PC-9 (cell line): ENCODE measurements at regions of chr9 and their contacts with region 1.

Region 1: GRCh38 chr9:136118320-136119060 is at the start of gene TMEM250:
- DNase-seq: peak; percentile 84 to 98
- H3K4me3 ChIP-seq: peak within 1 kb of the TSS; percentile 93
- H3K27ac ChIP-seq: peak within 1 kb of the TSS; percentile 49
- H3K4me1 ChIP-seq: 0 out of 2 replicates have a peak, but pooled peaks cover 12% of the 10 kb centered on the region
- H3K27me3 ChIP-seq: no peaks in the 10 kb centered on the region
- CTCF ChIP-seq: no peak
- total RNA-seq, gene TMEM250: 73.8 and 75.3 TPM in 2 replicates

Region 2: GRCh38 chr9:135602789-135603481 is 515.6 kb before region 1 on chr9:
- CTCF ChIA-PET with region 1: no interaction called
- POLR2A ChIA-PET with region 1: no interaction called
- intact Hi-C with region 1: loop called (anchors 5 kb)
- DNase-seq: peak in 1 of 2 experiments; percentile 48
- H3K4me3 ChIP-seq: no peak overlapping the region
- H3K27ac ChIP-seq: no peak overlapping the region
- H3K4me1 ChIP-seq: no peaks in the 10 kb centered on the region
- H3K27me3 ChIP-seq: peaks cover 70% of the 10 kb centered on the region
- CTCF ChIP-seq: peak; percentile 90

Region 3: GRCh38 chr9:135613946-135614805 is 504.3 kb before region 1 on chr9:
- CTCF ChIA-PET with region 1: no interaction called
- POLR2A ChIA-PET with region 1: no interaction called
- intact Hi-C with region 1: no loop called
- DNase-seq: no peak
- H3K4me3 ChIP-seq: no peak overlapping the region
- H3K27ac ChIP-seq: no peak overlapping the region
- H3K4me1 ChIP-seq: no peaks in the 10 kb centered on the region
- H3K27me3 ChIP-seq: peaks cover 86% of the 10 kb centered on the region
- CTCF ChIP-seq: no peak

Region 4: DNA sequence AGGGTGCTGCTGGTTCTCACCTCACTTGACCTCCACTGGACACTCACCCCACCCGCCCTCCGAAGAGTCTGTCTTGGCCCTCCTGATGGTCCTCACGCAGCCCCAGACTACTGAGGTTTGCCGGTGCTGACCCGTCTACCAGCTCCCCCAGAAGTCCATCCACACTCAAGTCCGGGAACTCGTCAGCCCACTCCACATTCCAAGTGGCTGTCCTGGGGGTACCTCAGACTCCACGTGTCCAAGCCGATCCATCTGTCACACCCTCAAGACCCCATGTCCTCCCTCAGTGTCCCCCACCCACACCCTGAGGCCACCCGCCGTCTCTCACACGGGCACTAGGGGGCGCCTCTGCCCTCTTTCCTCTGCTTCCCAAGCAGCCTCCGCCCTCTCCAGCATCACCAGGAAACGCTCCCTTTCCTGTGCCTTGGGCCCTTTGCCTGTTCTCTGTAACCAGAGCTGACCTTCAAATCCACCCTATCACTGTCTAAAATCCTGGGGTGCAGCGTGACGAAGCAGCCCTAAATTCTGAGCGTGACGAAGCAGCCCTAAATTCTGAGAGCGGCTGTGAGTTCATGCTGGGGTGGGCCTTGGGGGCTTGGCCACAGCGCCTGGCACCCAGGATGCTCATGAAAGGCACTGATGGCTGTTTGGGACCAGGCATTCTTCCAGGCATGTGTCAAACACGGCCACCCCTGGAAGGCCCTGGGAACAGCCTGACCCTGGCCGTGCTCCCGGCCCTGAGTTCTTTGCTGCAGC is 320.8 kb before region 1 on chr9:
- CTCF ChIA-PET with region 1: no interaction called
- POLR2A ChIA-PET with region 1: no interaction called
- intact Hi-C with region 1: loop called (anchors 5 kb)
- DNase-seq: peak in 1 of 2 experiments; percentile 33
- H3K4me3 ChIP-seq: no peak overlapping the region
- H3K27ac ChIP-seq: no peak overlapping the region
- H3K4me1 ChIP-seq: no peaks in the 10 kb centered on the region
- H3K27me3 ChIP-seq: no peaks in the 10 kb centered on the region
- CTCF ChIP-seq: peak; percentile 53

Region 5: GRCh38 chr9:135961277-135961705 is 157.2 kb before region 1 on chr9 and contains the start of gene UBAC1:
- CTCF ChIA-PET with region 1: no interaction called
- POLR2A ChIA-PET with region 1: no interaction called
- intact Hi-C with region 1: loop called (anchors 2 kb)
- DNase-seq: peak; percentile 64 to 87
- H3K4me3 ChIP-seq: peak within 1 kb of the TSS; percentile 47; the same call in 1 of the 2 replicates
- H3K27ac ChIP-seq: no peak within 1 kb of the TSS
- H3K4me1 ChIP-seq: no peaks in the 10 kb centered on the region
- H3K27me3 ChIP-seq: no peaks in the 10 kb centered on the region
- CTCF ChIP-seq: no peak
- total RNA-seq, gene UBAC1: 27.6 and 37.1 TPM in 2 replicates

Region 6: GRCh38 chr9:136051517-136052432 is 66.7 kb before region 1 on chr9:
- CTCF ChIA-PET with region 1: no interaction called
- POLR2A ChIA-PET with region 1: no interaction called
- intact Hi-C with region 1: loop called (anchors 5 kb)
- DNase-seq: peak; percentile 92 to 96
- H3K4me3 ChIP-seq: peak overlapping the region; percentile 74
- H3K27ac ChIP-seq: peak overlapping the region; percentile 65
- H3K4me1 ChIP-seq: peaks cover 33% of the 10 kb centered on the region
- H3K27me3 ChIP-seq: no peaks in the 10 kb centered on the region
- CTCF ChIP-seq: no peak

Region 7: DNA sequence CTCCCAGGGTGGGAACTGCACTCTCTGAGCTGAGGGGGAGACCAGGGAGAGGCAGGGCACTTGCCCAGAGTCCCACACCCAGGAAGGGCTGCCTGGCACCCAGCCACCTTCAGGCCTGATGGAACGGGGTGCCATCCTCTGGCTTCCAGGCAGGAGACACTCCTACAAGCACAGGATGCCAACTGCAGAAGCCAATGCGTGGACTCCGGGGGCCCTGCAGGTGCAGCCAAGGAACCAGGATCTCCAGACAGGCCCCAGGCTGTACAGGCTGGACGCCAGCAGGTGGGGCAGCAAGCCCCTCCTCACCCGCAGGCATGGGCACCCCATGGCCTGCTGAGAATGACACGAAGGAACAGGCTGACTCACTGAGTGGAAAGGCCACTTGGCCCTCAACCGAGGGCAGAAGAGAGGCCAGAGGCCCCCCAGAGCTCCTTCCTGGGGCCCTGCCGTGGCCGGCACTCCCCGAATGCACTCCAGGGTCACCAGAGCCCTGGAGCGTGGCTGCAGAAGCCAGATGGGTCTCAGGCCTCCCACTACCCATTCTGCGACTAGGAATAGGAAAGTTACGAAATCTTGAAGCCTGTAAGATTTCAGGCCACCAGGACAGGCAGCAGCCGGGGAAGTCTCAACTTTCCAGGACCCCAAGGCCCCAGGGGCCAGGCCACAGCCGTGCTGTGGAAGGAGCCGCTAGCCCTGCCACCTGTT is 39.1 kb before region 1 on chr9:
- CTCF ChIA-PET with region 1: no interaction called
- POLR2A ChIA-PET with region 1: no interaction called
- intact Hi-C with region 1: loop called (anchors 5 kb)
- DNase-seq: peak; percentile 72 to 90
- H3K4me3 ChIP-seq: no peak overlapping the region
- H3K27ac ChIP-seq: no peak overlapping the region
- H3K4me1 ChIP-seq: peaks cover 13% of the 10 kb centered on the region; the same call in 1 of the 2 replicates
- H3K27me3 ChIP-seq: no peaks in the 10 kb centered on the region
- CTCF ChIP-seq: no peak

Region 8: GRCh38 chr9:136093995-136094881 is 24.3 kb before region 1 on chr9:
- CTCF ChIA-PET with region 1: interaction called, 13 read pairs
- POLR2A ChIA-PET with region 1: no interaction called
- intact Hi-C with region 1: loop called (anchors 5 kb)
- DNase-seq: peak in 1 of 2 experiments; percentile 76
- H3K4me3 ChIP-seq: peak overlapping the region; percentile 88
- H3K27ac ChIP-seq: no peak overlapping the region
- H3K4me1 ChIP-seq: peaks cover 22% of the 10 kb centered on the region
- H3K27me3 ChIP-seq: no peaks in the 10 kb centered on the region
- CTCF ChIP-seq: no peak